PC-9 (cell line): ENCODE measurements at regions of chr2 and their contacts with region 1.

Region 1: DNA sequence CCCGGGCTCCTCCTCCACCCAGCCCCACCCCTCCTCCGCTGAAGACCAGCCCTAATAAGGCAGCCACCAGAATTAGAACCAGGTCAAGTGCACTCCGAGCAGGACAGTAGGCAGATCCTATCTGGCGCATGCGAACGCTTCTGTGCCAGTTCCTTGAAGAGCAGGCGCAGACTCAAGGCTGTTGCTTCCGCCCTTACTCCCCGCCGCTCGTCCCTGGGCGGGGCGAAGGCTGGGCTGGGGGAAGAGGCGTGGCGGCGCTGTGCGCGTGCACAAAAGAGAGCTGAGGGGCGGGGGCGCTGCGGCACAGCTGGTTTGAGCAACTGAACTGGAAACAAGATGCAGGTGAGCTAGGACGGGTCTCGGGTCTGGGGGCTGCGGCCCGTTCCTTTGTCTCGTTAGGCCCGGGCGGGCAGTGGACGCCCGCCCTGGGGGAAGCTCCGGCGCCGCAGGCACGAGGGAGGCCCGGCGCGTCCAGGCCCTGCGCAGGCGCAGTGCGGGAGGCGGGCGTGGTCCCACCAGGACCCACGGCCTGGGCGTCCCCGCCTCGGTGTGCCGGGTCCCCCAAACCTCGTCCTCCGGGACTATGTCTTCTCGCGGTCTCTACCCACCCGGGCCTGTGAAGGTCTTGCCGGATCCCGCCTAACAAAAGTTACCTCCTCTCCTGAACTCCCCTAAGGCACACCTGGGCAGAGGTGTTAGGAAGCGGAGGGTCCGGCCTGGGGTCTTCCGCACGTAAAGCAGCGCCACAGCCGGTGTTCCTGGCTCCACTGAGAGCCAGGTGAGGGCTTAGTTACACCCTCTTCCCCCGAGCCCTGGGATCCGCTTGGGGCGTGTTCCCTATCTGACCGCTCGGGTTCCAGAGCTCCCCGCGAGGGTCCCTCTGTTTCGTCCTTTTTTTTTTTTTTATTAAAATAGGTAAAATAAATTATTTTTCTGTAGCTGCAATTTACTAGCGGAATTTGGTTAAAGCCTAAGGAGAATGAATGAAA is at the start of gene PDCL3:
- DNase-seq: peak; percentile 97 to 100
- H3K4me3 ChIP-seq: peak within 1 kb of the TSS; percentile 88
- H3K27ac ChIP-seq: peak within 1 kb of the TSS; percentile 82
- H3K4me1 ChIP-seq: peaks cover 16% of the 10 kb centered on the region
- H3K27me3 ChIP-seq: no peaks in the 10 kb centered on the region
- CTCF ChIP-seq: peak; percentile 42; the same call in 1 of the 2 replicates
- total RNA-seq, gene PDCL3: 22.7 and 23.5 TPM in 2 replicates

Region 2: GRCh38 chr2:100589527-100589926 is 26.5 kb after region 1 on chr2:
- CTCF ChIA-PET with region 1: interaction called, 13 read pairs
- POLR2A ChIA-PET with region 1: interaction called, 4 read pairs
- intact Hi-C with region 1: no loop called
- DNase-seq: no peak
- H3K4me3 ChIP-seq: no peak overlapping the region
- H3K27ac ChIP-seq: no peak overlapping the region
- H3K4me1 ChIP-seq: peaks cover 8% of the 10 kb centered on the region; the same call in 1 of the 2 replicates
- H3K27me3 ChIP-seq: no peaks in the 10 kb centered on the region
- CTCF ChIP-seq: no peak

Region 3: GRCh38 chr2:100708333-100708732 is 145.3 kb after region 1 on chr2:
- CTCF ChIA-PET with region 1: no interaction called
- POLR2A ChIA-PET with region 1: no interaction called
- intact Hi-C with region 1: no loop called
- DNase-seq: no peak
- H3K4me3 ChIP-seq: no peak overlapping the region
- H3K27ac ChIP-seq: no peak overlapping the region
- H3K4me1 ChIP-seq: no peaks in the 10 kb centered on the region
- H3K27me3 ChIP-seq: no peaks in the 10 kb centered on the region
- CTCF ChIP-seq: no peak